ENCODE measurements at regions of chr18 and their contacts with region 1.

Region 1: DNA sequence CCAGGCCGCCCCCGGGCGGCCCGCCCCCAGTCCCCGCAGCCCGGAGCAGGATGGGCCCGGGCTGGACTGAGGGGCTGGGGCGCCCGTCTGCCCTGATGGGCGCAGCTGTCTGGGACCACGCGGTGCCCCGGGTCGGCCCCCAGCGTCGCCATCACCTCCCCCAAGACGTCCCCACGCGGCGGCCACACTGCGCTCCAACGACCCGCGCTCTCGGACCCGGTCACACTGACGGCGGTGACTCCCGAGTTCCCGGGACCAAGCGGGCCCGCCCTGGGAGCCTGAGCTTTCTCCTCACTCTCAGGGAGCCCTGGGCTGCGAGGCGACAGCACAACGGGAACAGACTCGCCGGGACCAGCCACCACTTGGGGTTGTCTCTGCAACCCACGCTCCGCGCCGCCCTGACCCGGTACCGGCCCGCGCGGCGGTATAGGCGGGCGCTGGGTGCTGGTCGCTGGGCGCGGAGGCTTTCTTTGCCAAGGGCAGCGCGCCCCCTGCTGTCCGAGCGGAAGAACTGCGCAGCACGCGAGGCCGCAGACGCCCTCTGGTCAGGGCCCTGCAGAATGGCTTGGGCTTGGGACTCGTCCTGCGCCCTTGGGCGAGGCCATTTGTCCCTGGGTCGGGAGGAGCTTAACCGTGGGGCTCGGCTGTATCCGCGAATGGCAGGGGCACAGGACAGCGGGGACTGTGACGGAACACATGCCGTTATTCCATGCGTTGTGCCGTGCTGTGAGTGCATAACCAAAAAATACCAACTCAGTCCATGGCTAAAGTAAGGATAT is 54.8 kb upstream of the ANKRD62 start:
- DNase-seq: peak; percentile 48 to 74 (median 67)
- H3K4me3 ChIP-seq: peak overlapping the region in 1 of 2 donors; percentile 12
- H3K4me3 Mint-ChIP-seq: peak overlapping the region; percentile 39 to 79 (median 66)
- H3K27ac ChIP-seq: no peak overlapping the region
- H3K27ac Mint-ChIP-seq: no peak overlapping the region
- H3K4me1 ChIP-seq: peaks cover 4% of the 10 kb centered on the region
- H3K4me1 Mint-ChIP-seq: peaks cover 0 to 4% (median under 1%) of the 10 kb centered on the region in 4 donors
- H3K27me3 ChIP-seq: peaks cover 6% of the 10 kb centered on the region
- H3K27me3 Mint-ChIP-seq: peaks cover 7 to 20% of the 10 kb centered on the region in 2 donors

Region 2: GRCh38 chr18:10560450-10561045 is 1478.3 kb before region 1 on chr18:
- CTCF ChIA-PET with region 1: no interaction called
- POLR2A ChIA-PET with region 1: no interaction called
- intact Hi-C with region 1: loop called (anchors 2 kb)
- DNase-seq: peak in 4 of 5 donors; percentile 34 to 54 (median 44)
- H3K4me3 ChIP-seq: no peak overlapping the region
- H3K4me3 Mint-ChIP-seq: peak overlapping the region in 3 of 8 donors; percentile 6 to 61 (median 46)
- H3K27ac ChIP-seq: no peak overlapping the region
- H3K27ac Mint-ChIP-seq: no peak overlapping the region
- H3K4me1 ChIP-seq: peaks cover 5% of the 10 kb centered on the region
- H3K4me1 Mint-ChIP-seq: peaks cover 5 to 16% (median 12%) of the 10 kb centered on the region in 4 donors
- H3K27me3 ChIP-seq: no peaks in the 10 kb centered on the region
- H3K27me3 Mint-ChIP-seq: no peaks in the 10 kb centered on the region

Region 3: DNA sequence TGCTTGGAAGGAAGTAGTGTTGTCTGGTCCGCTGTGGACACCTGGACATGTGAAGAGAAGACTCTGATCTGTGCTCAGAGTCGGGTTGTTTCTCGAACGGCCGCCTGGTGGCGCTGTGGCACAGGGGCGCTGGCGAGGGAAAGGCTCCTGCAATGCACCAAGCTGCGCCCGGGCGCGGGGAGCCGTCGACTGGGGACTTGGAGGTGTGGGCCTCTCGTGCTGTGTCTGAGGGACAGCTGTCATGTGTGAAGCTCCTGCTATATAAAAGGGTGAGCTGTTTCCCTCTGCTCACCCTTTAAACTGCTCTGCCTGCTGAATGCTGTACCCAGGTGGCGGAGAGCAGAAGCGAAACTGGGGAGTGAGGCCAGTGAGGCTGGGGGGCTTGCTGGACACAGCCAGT is 305.8 kb before region 1 on chr18:
- CTCF ChIA-PET with region 1: interaction called, 19 read pairs
- POLR2A ChIA-PET with region 1: no interaction called
- intact Hi-C with region 1: loop called (anchors 1 kb)
- DNase-seq: peak; percentile 38 to 58 (median 44)
- H3K4me3 ChIP-seq: no peak overlapping the region
- H3K4me3 Mint-ChIP-seq: peak overlapping the region in 2 of 8 donors; percentile 22 to 27
- H3K27ac ChIP-seq: no peak overlapping the region
- H3K27ac Mint-ChIP-seq: no peak overlapping the region
- H3K4me1 ChIP-seq: no peaks in the 10 kb centered on the region
- H3K4me1 Mint-ChIP-seq: peaks cover 0 to 3% (median under 1%) of the 10 kb centered on the region in 4 donors
- H3K27me3 ChIP-seq: no peaks in the 10 kb centered on the region
- H3K27me3 Mint-ChIP-seq: peaks cover 18 to 26% of the 10 kb centered on the region in 2 donors

Region 4: DNA sequence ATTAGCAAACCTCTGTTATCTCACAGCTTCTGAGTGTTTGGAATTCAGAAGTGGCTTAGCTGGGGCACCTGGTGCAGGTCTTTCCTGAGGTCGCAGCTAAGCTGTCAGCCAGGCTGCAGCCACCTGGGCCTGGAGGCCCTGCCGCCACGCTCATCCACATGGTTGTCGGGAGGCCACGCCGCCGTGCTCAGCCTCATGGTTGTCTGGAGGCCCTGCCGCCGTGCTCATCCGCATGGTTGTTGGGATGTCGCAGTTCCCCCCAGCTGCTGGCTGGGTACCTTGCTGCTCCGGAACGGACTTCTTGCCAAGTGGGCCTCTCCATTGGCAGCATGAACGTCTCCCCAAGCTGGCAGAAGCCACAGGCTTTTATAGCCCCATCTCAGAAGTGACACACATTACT is 106.4 kb before region 1 on chr18:
- CTCF ChIA-PET with region 1: interaction called, 132 read pairs
- POLR2A ChIA-PET with region 1: no interaction called
- intact Hi-C with region 1: no loop called
- DNase-seq: no peak
- H3K4me3 ChIP-seq: no peak overlapping the region
- H3K4me3 Mint-ChIP-seq: no peak overlapping the region
- H3K27ac ChIP-seq: no peak overlapping the region
- H3K27ac Mint-ChIP-seq: no peak overlapping the region
- H3K4me1 ChIP-seq: no peaks in the 10 kb centered on the region
- H3K4me1 Mint-ChIP-seq: no peaks in the 10 kb centered on the region
- H3K27me3 ChIP-seq: no peaks in the 10 kb centered on the region
- H3K27me3 Mint-ChIP-seq: no peaks in the 10 kb centered on the region

Region 5: GRCh38 chr18:12086237-12086637 is 47.4 kb after region 1 on chr18:
- CTCF ChIA-PET with region 1: no interaction called
- POLR2A ChIA-PET with region 1: no interaction called
- intact Hi-C with region 1: no loop called
- DNase-seq: no peak
- H3K4me3 ChIP-seq: no peak overlapping the region
- H3K4me3 Mint-ChIP-seq: no peak overlapping the region
- H3K27ac ChIP-seq: no peak overlapping the region
- H3K27ac Mint-ChIP-seq: no peak overlapping the region
- H3K4me1 ChIP-seq: no peaks in the 10 kb centered on the region
- H3K4me1 Mint-ChIP-seq: no peaks in the 10 kb centered on the region
- H3K27me3 ChIP-seq: no peaks in the 10 kb centered on the region
- H3K27me3 Mint-ChIP-seq: peaks cover 0 to 7% of the 10 kb centered on the region in 2 donors

Region 6: DNA sequence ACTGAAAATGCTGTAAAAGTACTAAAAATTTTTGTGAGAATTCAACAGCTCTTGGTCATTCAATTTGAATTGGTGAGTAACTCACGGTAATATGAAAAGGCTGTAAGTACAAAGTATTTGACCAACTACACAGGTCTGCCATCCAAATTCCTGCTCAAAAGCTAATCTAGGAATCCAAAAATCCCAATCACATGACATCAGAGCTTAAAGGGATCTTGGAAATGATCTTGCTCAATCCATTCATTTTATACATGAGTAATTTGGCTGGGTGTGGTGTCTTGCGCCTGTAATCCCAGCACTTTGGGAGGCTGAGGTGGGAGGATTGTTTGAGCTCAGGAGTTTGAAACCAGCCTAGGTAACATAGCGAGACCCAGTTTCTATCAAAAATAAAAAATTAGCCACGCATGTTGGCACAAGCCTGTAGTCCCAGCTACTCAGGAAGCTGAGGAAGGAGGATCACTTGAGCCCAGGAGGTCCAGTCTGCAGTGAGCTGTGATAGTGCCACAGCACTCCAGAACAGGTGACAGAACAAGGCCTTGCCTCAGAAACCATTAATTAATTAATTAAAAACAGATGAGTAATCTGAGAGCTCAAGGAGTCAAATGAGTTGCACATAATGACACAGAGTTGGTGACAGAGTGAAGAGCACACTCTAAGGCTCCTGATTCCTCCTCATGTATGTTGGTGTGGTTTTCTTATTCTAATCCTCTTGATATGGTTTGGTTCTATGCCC is 599.2 kb after region 1 on chr18:
- CTCF ChIA-PET with region 1: no interaction called
- POLR2A ChIA-PET with region 1: no interaction called
- intact Hi-C with region 1: no loop called
- DNase-seq: no peak
- H3K4me3 ChIP-seq: no peak overlapping the region
- H3K4me3 Mint-ChIP-seq: no peak overlapping the region
- H3K27ac ChIP-seq: no peak overlapping the region
- H3K27ac Mint-ChIP-seq: no peak overlapping the region
- H3K4me1 ChIP-seq: no peaks in the 10 kb centered on the region
- H3K4me1 Mint-ChIP-seq: no peaks in the 10 kb centered on the region
- H3K27me3 ChIP-seq: no peaks in the 10 kb centered on the region
- H3K27me3 Mint-ChIP-seq: peaks cover under 1 to 2% of the 10 kb centered on the region in 2 donors

Measured in CD4-positive, alpha-beta memory T cell (primary cell).